PC-3 (cell line): ENCODE measurements at regions of chr10 and their contacts with region 1.

Region 1: GRCh38 chr10:21953585-21954057 is 49.9 kb downstream of the DNAJC1 start:
- DNase-seq: peak; percentile 43
- ATAC-seq: peak; percentile 55
- H3K4me3 ChIP-seq: no peak overlapping the region
- H3K27ac ChIP-seq: no peak overlapping the region
- H3K4me1 ChIP-seq: no peaks in the 10 kb centered on the region
- H3K27me3 ChIP-seq: no peaks in the 10 kb centered on the region
- CTCF ChIP-seq: peak; percentile 50

Region 2: GRCh38 chr10:21746118-21746517 is 207.5 kb before region 1 on chr10:
- CTCF ChIA-PET with region 1: interaction called, 5 read pairs
- POLR2A ChIA-PET with region 1: no interaction called
- intact Hi-C with region 1: loop called (anchors 10 kb)
- DNase-seq: no peak
- ATAC-seq: no peak
- H3K4me3 ChIP-seq: no peak overlapping the region
- H3K27ac ChIP-seq: no peak overlapping the region
- H3K4me1 ChIP-seq: peaks cover 57% of the 10 kb centered on the region
- H3K27me3 ChIP-seq: no peaks in the 10 kb centered on the region
- CTCF ChIP-seq: no peak